ENCODE measurements at regions of chr1 and their contacts with region 1.

Region 1: GRCh38 chr1:186212544-186213226 is 162.4 kb downstream of the TPR start:
- DNase-seq: peak; percentile 40
- ATAC-seq: peak; percentile 98
- H3K4me3 Mint-ChIP-seq: no peak overlapping the region
- H3K27ac Mint-ChIP-seq: no peak overlapping the region
- H3K4me1 Mint-ChIP-seq: peaks cover 12% of the 10 kb centered on the region
- H3K27me3 Mint-ChIP-seq: no peaks in the 10 kb centered on the region
- CTCF ChIP-seq: peak; percentile 58

Region 2: DNA sequence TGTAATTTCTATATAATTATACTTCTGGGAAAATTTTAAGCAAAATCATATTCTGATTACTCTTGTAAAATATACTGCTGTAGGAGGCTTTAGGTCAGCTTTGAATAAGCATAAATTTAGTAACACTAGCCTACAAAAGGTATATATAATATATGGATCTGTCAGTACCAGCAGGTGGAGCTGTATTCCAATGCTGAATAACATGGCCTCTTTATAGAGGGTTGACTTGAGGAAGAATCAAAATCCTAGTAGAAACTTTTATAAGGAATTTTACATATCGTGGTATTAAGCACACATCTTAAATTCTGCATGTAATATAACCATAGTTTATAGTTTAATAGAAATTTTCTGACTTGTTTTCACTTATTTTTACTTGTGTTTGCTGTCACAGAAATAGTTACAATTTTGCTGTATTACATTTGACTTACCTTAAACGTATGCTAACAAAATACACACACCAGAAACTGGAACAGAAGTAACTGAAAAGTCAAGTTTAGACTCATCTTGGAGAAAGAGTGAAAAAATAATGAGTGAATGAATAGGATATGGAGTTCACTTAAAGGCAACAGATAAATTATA is 399.2 kb before region 1 on chr1:
- CTCF ChIA-PET with region 1: interaction called, 12 read pairs
- POLR2A ChIA-PET with region 1: no interaction called
- DNase-seq: no peak
- ATAC-seq: peak; percentile 88
- H3K4me3 Mint-ChIP-seq: no peak overlapping the region
- H3K27ac Mint-ChIP-seq: no peak overlapping the region; the same call in 1 of the 2 replicates
- H3K4me1 Mint-ChIP-seq: peaks cover 16% of the 10 kb centered on the region
- H3K27me3 Mint-ChIP-seq: no peaks in the 10 kb centered on the region
- CTCF ChIP-seq: peak; percentile 38

Region 3: DNA sequence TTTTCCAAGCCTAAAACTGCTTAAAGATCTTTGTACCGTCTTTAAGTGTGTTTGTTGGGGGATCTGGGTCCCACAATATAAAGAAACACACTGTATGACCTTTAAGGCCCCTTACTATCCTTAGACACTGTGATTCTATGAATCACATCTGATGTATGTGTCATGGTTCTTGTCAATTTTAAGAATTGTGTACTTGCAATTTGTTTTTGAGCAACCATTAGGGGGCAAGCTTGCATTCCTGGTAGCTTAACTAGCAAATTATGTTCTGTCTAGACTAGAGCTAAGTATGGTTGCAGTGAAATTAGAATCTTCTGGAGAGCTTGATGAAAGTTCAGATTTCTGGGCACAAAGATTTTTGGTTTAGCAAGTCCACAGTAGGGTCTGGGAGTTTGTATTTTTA is 57.1 kb before region 1 on chr1:
- CTCF ChIA-PET with region 1: interaction called, 15 read pairs
- POLR2A ChIA-PET with region 1: no interaction called
- DNase-seq: no peak
- ATAC-seq: peak; percentile 66
- H3K4me3 Mint-ChIP-seq: no peak overlapping the region
- H3K27ac Mint-ChIP-seq: no peak overlapping the region
- H3K4me1 Mint-ChIP-seq: no peaks in the 10 kb centered on the region
- H3K27me3 Mint-ChIP-seq: no peaks in the 10 kb centered on the region; the same call in 1 of the 2 replicates
- CTCF ChIP-seq: no peak